ENCODE measurements at regions of chr12 and their contacts with region 1.

Region 1: GRCh38 chr12:91811481-91812287 is 334.0 kb downstream of the BTG1 start:
- DNase-seq: peak; percentile 37
- H3K4me3 Mint-ChIP-seq: no peak overlapping the region
- H3K27ac Mint-ChIP-seq: no peak overlapping the region
- H3K4me1 Mint-ChIP-seq: peaks cover 15% of the 10 kb centered on the region
- H3K27me3 Mint-ChIP-seq: no peaks in the 10 kb centered on the region

Region 2: GRCh38 chr12:91382081-91382543 is 429.6 kb before region 1 on chr12:
- intact Hi-C with region 1: loop called (anchors 5 kb)
- DNase-seq: peak; percentile 64
- H3K4me3 Mint-ChIP-seq: peak overlapping the region; percentile 78
- H3K27ac Mint-ChIP-seq: no peak overlapping the region
- H3K4me1 Mint-ChIP-seq: peaks cover 3% of the 10 kb centered on the region
- H3K27me3 Mint-ChIP-seq: peaks cover 6% of the 10 kb centered on the region

Region 3: GRCh38 chr12:91877022-91877421 is 65.3 kb after region 1 on chr12:
- intact Hi-C with region 1: no loop called
- DNase-seq: peak; percentile 75
- H3K4me3 Mint-ChIP-seq: peak overlapping the region; percentile 54
- H3K27ac Mint-ChIP-seq: peak overlapping the region; percentile 94
- H3K4me1 Mint-ChIP-seq: peaks cover 48% of the 10 kb centered on the region
- H3K27me3 Mint-ChIP-seq: no peaks in the 10 kb centered on the region

Measured in activated T-helper 2 cell treated with anti-CD3 and anti-CD28 coated beads, Interferon-gamma antibody, Interleukin-2, Interleukin-4, amounts not matched to agents 10 μg/mL and 5 μg/mL and 100 μg/mL, durations not matched to agents 14 hours and 24 hours and 36 hours (primary cell).